ENCODE measurements at regions of chrX and their contacts with region 1.

Region 1: GRCh38 chrX:129701624-129702069 is 37.1 kb upstream of the XPNPEP2 start:
- DNase-seq: peak; percentile 68 to 87 (median 75)
- ATAC-seq: peak; percentile 17 to 69 (median 56)
- H3K4me3 ChIP-seq: no peak overlapping the region
- H3K27ac ChIP-seq: peak overlapping the region in 8 of 12 donors; percentile 15 to 46 (median 30)
- H3K4me1 ChIP-seq: peaks cover 0 to 19% (median 5%) of the 10 kb centered on the region in 12 donors
- H3K27me3 ChIP-seq: no peaks in the 10 kb centered on the region
- CTCF ChIP-seq: no peak
- POLR2A ChIP-seq: no peak

Region 2: GRCh38 chrX:129247642-129248041 is 454.0 kb before region 1 on chrX:
- intact Hi-C with region 1: no loop called
- DNase-seq: no peak
- ATAC-seq: no peak
- H3K4me3 ChIP-seq: no peak overlapping the region
- H3K27ac ChIP-seq: no peak overlapping the region
- H3K4me1 ChIP-seq: no peaks in the 10 kb centered on the region
- H3K27me3 ChIP-seq: no peaks in the 10 kb centered on the region
- CTCF ChIP-seq: no peak
- POLR2A ChIP-seq: no peak

Region 3: DNA sequence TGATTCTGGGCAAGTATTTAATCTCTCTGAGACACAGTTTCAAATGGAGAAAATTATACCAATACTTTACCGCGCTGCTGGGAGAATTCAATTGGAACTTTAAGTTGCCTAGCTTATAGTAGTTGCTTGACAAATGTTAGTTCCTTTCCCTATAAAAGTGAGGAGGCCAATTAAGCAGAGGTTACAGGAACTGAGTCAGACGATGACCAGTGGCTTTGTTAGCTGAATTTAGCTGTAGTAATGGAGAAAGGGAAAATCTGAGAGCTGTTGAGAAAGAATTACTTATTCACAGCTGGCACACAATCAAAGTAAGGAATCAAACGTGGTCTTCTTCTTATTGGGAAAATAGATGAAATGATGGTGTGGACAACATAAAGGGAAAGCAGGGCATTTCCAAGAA is 208.0 kb before region 1 on chrX:
- intact Hi-C with region 1: no loop called
- DNase-seq: no peak
- ATAC-seq: no peak
- H3K4me3 ChIP-seq: no peak overlapping the region
- H3K27ac ChIP-seq: no peak overlapping the region
- H3K4me1 ChIP-seq: no peaks in the 10 kb centered on the region
- H3K27me3 ChIP-seq: no peaks in the 10 kb centered on the region
- CTCF ChIP-seq: no peak
- POLR2A ChIP-seq: no peak

Region 4: GRCh38 chrX:129663171-129663570 is 38.5 kb before region 1 on chrX:
- intact Hi-C with region 1: loop called in 1 of 10 experiments (anchors 5 kb)
- DNase-seq: peak in 2 of 5 donors; percentile 45 to 63
- ATAC-seq: peak in 3 of 4 donors; percentile 46 to 86 (median 46)
- H3K4me3 ChIP-seq: no peak overlapping the region
- H3K27ac ChIP-seq: peak overlapping the region in 5 of 12 donors; percentile 9 to 62 (median 29)
- H3K4me1 ChIP-seq: peaks cover 0 to 7% (median 0%) of the 10 kb centered on the region in 12 donors
- H3K27me3 ChIP-seq: no peaks in the 10 kb centered on the region
- CTCF ChIP-seq: no peak
- POLR2A ChIP-seq: no peak

Measured in heart left ventricle (tissue), 16 donors.